Activated naive CD4-positive, alpha-beta T cell treated with anti-CD3 and anti-CD28 coated beads for 36 hours (primary cell): ENCODE measurements at regions of chr5 and their contacts with region 1.

Region 1: GRCh38 chr5:172173831-172174153 is 14.2 kb downstream of the STK10 start:
- DNase-seq: peak; percentile 97
- H3K4me3 Mint-ChIP-seq: peak overlapping the region; percentile 89
- H3K27ac Mint-ChIP-seq: peak overlapping the region; percentile 94
- H3K4me1 Mint-ChIP-seq: peaks cover 90% of the 10 kb centered on the region
- H3K27me3 Mint-ChIP-seq: no peaks in the 10 kb centered on the region

Region 2: GRCh38 chr5:171272996-171273970 is 900.5 kb before region 1 on chr5:
- CTCF ChIA-PET with region 1: no interaction called
- intact Hi-C with region 1: no loop called
- DNase-seq: peak; percentile 35
- H3K4me3 Mint-ChIP-seq: no peak overlapping the region
- H3K27ac Mint-ChIP-seq: no peak overlapping the region
- H3K4me1 Mint-ChIP-seq: no peaks in the 10 kb centered on the region
- H3K27me3 Mint-ChIP-seq: peaks cover 8% of the 10 kb centered on the region

Region 3: DNA sequence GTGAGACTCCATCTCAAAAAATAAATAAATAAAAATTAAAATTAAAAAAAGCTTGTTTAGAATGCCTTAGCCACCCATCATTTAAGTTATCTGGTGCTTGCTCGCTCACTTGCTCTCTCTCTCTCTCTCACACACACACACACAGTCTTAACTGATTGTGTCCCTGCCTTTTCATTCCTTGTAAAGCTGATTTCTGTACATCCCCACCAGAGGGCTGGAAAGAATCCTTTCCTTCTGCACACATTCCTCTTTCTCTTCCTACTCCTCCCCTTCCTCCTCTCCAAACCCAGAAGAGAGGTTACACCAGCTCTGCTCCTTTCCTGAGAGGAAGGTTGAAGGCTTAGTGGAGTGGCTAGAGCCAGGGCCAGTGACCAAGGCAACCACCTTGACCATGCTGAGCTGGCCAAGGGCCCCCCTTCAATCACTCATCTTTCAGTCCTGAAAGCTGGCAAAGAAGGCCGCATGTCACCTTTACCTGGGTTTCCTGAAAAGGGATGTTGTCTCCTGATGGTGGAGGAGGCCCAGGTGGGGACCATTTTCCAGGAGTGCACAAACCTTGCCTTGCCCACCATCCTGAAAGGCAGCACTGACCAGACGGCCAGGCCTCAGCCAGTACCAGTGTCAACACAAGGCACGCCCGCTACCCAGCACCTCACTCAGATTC is 11.3 kb before region 1 on chr5:
- CTCF ChIA-PET with region 1: interaction called, 21 read pairs
- intact Hi-C with region 1: no loop called
- DNase-seq: no peak
- H3K4me3 Mint-ChIP-seq: no peak overlapping the region
- H3K27ac Mint-ChIP-seq: peak overlapping the region; percentile 50
- H3K4me1 Mint-ChIP-seq: peaks cover 67% of the 10 kb centered on the region
- H3K27me3 Mint-ChIP-seq: no peaks in the 10 kb centered on the region

Region 4: DNA sequence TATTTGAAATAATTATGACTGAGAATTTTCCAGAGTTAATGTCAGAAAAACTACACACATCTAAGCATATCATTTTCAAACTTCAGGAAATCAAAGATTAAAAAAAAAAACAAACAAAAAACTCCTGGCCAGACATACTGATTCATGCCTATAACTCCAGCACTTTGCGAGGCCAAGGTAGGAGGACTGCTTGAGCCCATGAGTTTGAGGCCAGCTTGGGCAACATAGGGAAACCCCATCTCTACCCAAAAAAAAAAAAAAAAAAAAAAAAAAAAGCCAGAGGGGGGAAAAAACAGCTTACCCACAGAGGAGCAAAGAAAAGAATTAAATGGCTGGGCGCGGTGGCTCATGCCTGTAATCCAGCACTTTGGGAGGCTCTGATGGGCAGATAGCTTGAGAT is 42.6 kb after region 1 on chr5:
- CTCF ChIA-PET with region 1: no interaction called
- intact Hi-C with region 1: no loop called
- DNase-seq: no peak
- H3K4me3 Mint-ChIP-seq: no peak overlapping the region
- H3K27ac Mint-ChIP-seq: no peak overlapping the region
- H3K4me1 Mint-ChIP-seq: no peaks in the 10 kb centered on the region
- H3K27me3 Mint-ChIP-seq: no peaks in the 10 kb centered on the region